Posterior vena cava (tissue), 2 donors: ENCODE measurements at regions of chr14 and their contacts with region 1.

Region 1: GRCh38 chr14:76918751-76919543 is 92.7 kb downstream of the LRRC74A start:
- DNase-seq: peak; percentile 98

Region 2: DNA sequence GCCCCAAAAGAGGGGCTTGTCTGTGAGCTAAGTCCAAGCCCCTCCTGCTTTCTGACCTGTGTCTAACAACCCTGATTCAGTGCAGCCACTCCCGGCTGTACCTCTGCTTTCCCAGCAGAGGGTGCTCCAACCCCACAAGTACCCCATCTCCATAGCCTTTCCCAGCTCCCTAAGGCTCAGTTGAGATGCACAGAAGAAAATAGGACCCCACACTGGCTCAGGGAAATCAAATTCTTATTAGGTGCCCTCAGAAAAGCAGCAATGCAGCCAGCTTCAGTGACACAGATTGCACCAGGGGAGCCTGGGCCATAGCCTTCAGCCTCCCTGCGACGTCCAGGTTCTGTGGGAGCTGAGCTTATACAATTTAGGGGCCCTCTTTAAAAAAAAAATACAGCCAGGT is 42.9 kb before region 1 on chr14:
- intact Hi-C with region 1: loop called in 1 of 2 experiments (anchors 2 kb)
- DNase-seq: no peak

Region 3: DNA sequence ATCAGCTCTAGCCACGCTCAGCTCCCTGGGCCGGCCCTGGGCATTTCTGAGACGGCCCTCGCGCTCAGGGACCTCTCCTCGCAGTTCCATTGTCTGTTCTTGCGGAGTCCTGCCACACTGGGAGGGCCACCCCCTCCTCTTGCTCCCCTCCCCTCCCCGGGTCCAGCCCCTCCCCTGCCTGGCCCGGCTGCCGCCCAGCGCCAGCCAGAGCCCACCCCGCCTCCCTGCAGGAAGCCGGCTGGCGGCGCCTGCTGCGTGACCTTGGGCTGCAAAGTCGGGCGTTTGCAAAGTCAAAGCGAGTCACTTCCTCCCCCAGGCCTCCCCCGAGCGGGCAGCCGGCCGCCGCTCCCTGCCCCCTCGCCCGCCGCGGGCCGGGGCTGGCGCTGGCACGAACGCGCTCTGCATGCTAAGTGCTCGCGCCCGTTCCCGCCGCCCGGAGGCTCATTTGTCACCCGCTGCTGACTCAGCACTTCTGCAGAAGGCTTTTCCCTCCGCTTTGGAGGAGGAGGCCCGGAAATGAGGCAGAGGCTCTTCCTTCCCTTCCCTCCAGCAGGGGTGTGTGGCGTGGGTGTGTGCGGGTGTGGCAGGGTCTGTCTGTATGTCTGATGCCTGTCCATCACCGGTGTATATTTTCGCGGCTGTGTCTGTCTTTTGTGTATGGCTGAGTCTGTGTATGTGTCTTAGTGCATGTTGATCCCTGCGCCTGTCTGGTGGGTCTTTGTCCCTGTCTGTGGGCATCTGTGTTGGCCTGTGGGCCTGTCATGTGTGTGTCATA is 37.6 kb after region 1 on chr14:
- intact Hi-C with region 1: loop called in 1 of 2 experiments (anchors 5 kb)
- DNase-seq: peak; percentile 98

Region 4: DNA sequence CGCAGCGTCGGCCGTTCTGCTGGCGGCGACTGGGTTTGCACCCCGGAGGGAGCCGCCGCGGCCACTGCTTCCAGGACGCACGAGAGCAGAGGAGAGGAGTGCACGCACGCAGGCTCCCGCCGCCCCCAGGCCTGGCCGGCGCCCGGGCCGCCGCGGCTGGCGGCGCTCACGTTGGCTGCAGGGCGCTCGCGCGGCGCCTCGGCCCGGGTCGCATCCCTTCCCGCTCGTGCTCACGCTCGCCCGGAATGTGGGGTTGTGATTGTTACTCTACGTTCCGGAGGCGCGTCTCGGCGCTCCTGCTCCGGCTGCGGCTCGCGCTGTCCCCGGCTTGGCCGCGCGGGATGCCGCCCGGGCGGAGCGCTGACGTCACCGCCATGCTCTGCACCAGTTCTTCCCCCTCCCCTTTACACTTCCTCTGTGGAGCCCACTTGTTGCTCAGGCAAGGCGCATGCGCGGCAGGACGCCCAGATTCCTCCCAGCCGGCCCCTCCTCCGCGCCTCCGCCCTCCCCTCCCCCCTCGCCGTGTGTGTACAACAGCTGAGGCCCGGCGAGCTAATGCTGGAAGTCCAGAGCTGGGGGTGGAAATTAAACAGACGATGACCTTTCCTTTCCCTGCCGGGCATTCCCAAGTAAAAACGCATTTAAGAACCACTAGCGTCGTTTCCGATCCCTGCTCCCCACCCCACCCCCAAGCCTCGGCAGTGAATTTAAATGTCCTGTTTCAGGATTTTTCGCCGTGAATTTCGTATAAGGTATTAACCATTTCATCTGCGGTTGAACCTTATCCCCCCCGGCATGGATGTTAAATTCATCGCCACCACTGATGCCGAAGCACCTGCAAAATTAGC is 109.7 kb after region 1 on chr14 and contains the start of gene IRF2BPL:
- intact Hi-C with region 1: loop called (anchors 2 to 5 kb)
- DNase-seq: peak; percentile 100
- total RNA-seq, gene IRF2BPL: 35.7 to 43.3 TPM